Naive thymus-derived CD4-positive, alpha-beta T cell (primary cell): ENCODE measurements at regions of chr15 and their contacts with region 1.

Region 1: GRCh38 chr15:72685925-72686794 is at the starts of genes BBS4 and HIGD2B:
- DNase-seq: peak; percentile 67 to 88 (median 84)
- ATAC-seq: peak; percentile 97
- H3K4me3 ChIP-seq: peak within 1 kb of the TSS; percentile 99
- H3K4me3 Mint-ChIP-seq: peak within 1 kb of the TSS; percentile 93 to 99 (median 98)
- H3K27ac ChIP-seq: peak within 1 kb of the TSS; percentile 82
- H3K27ac Mint-ChIP-seq: peak within 1 kb of the TSS; percentile 91 to 98 (median 96)
- H3K4me1 ChIP-seq: peaks cover 0 to 5% of the 10 kb centered on the region in 2 donors
- H3K4me1 Mint-ChIP-seq: peaks cover 8 to 25% (median 20%) of the 10 kb centered on the region in 7 donors
- H3K27me3 ChIP-seq: no peaks in the 10 kb centered on the region
- H3K27me3 Mint-ChIP-seq: peaks cover 0 to under 1% (median 0%) of the 10 kb centered on the region in 5 donors
- total RNA-seq, gene BBS4: 11.9 to 26.5 (median 16.2) TPM
- total RNA-seq, gene HIGD2B: 0.57 to 0.69 (median 0.64) TPM in 3 of 5 experiments, not detected in the others

Region 2: GRCh38 chr15:72231066-72231846 is 454.9 kb before region 1 on chr15 and contains the start of gene PKM:
- CTCF ChIA-PET with region 1: no interaction called
- POLR2A ChIA-PET with region 1: interaction called, 5 read pairs
- intact Hi-C with region 1: loop called (anchors 1 to 10 kb)
- DNase-seq: peak; percentile 82 to 99 (median 88)
- ATAC-seq: peak; percentile 65
- H3K4me3 ChIP-seq: peak within 1 kb of the TSS; percentile 73
- H3K4me3 Mint-ChIP-seq: peak within 1 kb of the TSS; percentile 95 to 100 (median 99)
- H3K27ac ChIP-seq: peak within 1 kb of the TSS; percentile 73
- H3K27ac Mint-ChIP-seq: peak within 1 kb of the TSS; percentile 89 to 99 (median 95)
- H3K4me1 ChIP-seq: peaks cover 34 to 39% of the 10 kb centered on the region in 2 donors
- H3K4me1 Mint-ChIP-seq: peaks cover 40 to 55% (median 50%) of the 10 kb centered on the region in 7 donors
- H3K27me3 ChIP-seq: no peaks in the 10 kb centered on the region
- H3K27me3 Mint-ChIP-seq: peaks cover 0 to 3% (median 0%) of the 10 kb centered on the region in 5 donors
- total RNA-seq, gene PKM: 237 to 1,627 (median 329) TPM

Region 3: DNA sequence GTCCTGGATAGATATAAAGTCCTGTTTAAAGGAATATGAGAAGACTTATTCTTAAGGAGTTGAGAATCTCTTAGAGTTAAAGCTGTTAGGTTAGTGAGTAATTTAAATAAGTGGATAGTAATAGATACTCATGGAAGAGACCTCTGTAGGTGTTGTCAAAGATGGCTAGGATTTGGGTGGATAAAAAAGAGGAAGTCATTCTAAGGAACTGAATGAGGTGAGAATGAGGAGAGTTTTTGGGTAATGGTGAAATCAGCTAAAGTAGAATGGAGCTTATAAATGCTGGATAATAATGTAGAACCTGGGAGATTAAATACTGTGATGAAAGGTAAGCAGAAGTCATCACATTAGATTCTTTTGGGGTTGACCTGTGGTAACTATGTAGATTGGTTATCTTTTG is 203.9 kb before region 1 on chr15:
- CTCF ChIA-PET with region 1: no interaction called
- POLR2A ChIA-PET with region 1: no interaction called
- intact Hi-C with region 1: no loop called
- DNase-seq: no peak
- ATAC-seq: no peak
- H3K4me3 ChIP-seq: no peak overlapping the region
- H3K4me3 Mint-ChIP-seq: peak overlapping the region in 9 of 10 donors; percentile 0 to 77 (median 52)
- H3K27ac ChIP-seq: no peak overlapping the region
- H3K27ac Mint-ChIP-seq: peak overlapping the region in 2 of 9 donors; percentile 13 to 39
- H3K4me1 ChIP-seq: peaks cover 44 to 46% of the 10 kb centered on the region in 2 donors
- H3K4me1 Mint-ChIP-seq: peaks cover 26 to 98% (median 76%) of the 10 kb centered on the region in 7 donors
- H3K27me3 ChIP-seq: no peaks in the 10 kb centered on the region
- H3K27me3 Mint-ChIP-seq: no peaks in the 10 kb centered on the region

Region 4: DNA sequence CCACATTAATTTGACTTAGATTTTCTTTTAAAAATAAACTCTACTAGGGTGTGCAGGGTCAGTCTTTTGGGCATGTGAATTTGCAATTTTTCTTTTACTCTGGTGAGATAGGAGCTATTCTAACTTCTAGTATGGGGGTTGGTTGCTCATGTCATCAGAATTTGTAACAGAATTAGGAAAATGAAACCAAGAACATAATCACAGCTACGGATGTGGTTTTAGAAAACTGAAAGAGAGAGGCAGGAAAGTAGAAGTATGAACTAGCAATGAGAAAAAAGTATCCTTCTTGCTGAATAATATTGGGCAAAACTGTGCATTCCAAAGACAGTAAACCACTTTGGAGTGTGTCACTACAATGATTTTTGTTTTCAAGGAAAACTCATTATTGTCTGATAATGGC is 54.1 kb after region 1 on chr15:
- CTCF ChIA-PET with region 1: no interaction called
- POLR2A ChIA-PET with region 1: no interaction called
- intact Hi-C with region 1: loop called in 1 of 2 experiments (anchors 2 kb)
- DNase-seq: peak in 7 of 9 donors; percentile 20 to 60 (median 37)
- ATAC-seq: peak; percentile 72
- H3K4me3 ChIP-seq: peak overlapping the region; percentile 2
- H3K4me3 Mint-ChIP-seq: peak overlapping the region; percentile 31 to 81 (median 69)
- H3K27ac ChIP-seq: peak overlapping the region; percentile 59
- H3K27ac Mint-ChIP-seq: peak overlapping the region; percentile 43 to 99 (median 84)
- H3K4me1 ChIP-seq: peaks cover 18 to 20% of the 10 kb centered on the region in 2 donors
- H3K4me1 Mint-ChIP-seq: peaks cover 22 to 47% (median 35%) of the 10 kb centered on the region in 7 donors
- H3K27me3 ChIP-seq: no peaks in the 10 kb centered on the region
- H3K27me3 Mint-ChIP-seq: no peaks in the 10 kb centered on the region

Region 5: DNA sequence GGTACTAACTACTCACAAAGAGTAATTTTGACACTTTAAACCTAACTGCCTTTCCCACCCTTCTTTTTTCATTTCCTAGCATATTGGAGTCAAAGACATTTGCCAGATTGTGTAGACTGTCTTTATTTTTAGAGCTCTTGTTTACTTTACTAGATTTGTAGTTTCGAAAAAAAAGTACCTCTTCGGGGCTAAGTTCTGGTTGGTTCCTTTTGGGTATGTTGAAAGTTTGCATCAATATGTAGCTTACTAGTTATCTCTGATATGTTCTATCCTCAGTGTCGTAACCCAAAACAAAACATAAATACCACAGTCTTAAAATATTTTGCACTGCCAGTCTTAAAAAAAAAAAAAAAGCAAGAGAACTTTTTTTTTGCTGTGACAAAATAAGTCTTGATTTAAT is 809.0 kb after region 1 on chr15:
- CTCF ChIA-PET with region 1: no interaction called
- POLR2A ChIA-PET with region 1: no interaction called
- intact Hi-C with region 1: no loop called
- DNase-seq: no peak
- ATAC-seq: no peak
- H3K4me3 ChIP-seq: no peak overlapping the region
- H3K4me3 Mint-ChIP-seq: no peak overlapping the region
- H3K27ac ChIP-seq: no peak overlapping the region
- H3K27ac Mint-ChIP-seq: no peak overlapping the region
- H3K4me1 ChIP-seq: no peaks in the 10 kb centered on the region
- H3K4me1 Mint-ChIP-seq: no peaks in the 10 kb centered on the region
- H3K27me3 ChIP-seq: no peaks in the 10 kb centered on the region
- H3K27me3 Mint-ChIP-seq: peaks cover 8 to 47% (median 30%) of the 10 kb centered on the region in 5 donors